ENCODE measurements at regions of chr5 and their contacts with region 1.

Region 1: GRCh38 chr5:22926574-22926973 is 73.4 kb upstream of the CDH12 start:
- DNase-seq: no peak
- H3K4me3 ChIP-seq: no peak overlapping the region
- H3K4me3 Mint-ChIP-seq: no peak overlapping the region
- H3K27ac Mint-ChIP-seq: no peak overlapping the region
- H3K4me1 ChIP-seq: no peaks in the 10 kb centered on the region
- H3K4me1 Mint-ChIP-seq: no peaks in the 10 kb centered on the region
- H3K27me3 ChIP-seq: no peaks in the 10 kb centered on the region
- H3K27me3 Mint-ChIP-seq: no peaks in the 10 kb centered on the region
- CTCF ChIP-seq: no peak

Region 2: GRCh38 chr5:22986281-22986680 is 59.7 kb after region 1 on chr5:
- CTCF ChIA-PET with region 1: no interaction called
- POLR2A ChIA-PET with region 1: no interaction called
- intact Hi-C with region 1: loop called (anchors 2 kb)
- DNase-seq: no peak
- H3K4me3 ChIP-seq: no peak overlapping the region
- H3K4me3 Mint-ChIP-seq: no peak overlapping the region
- H3K27ac Mint-ChIP-seq: no peak overlapping the region
- H3K4me1 ChIP-seq: no peaks in the 10 kb centered on the region
- H3K4me1 Mint-ChIP-seq: no peaks in the 10 kb centered on the region
- H3K27me3 ChIP-seq: no peaks in the 10 kb centered on the region
- H3K27me3 Mint-ChIP-seq: peaks cover 3% of the 10 kb centered on the region
- CTCF ChIP-seq: no peak

Measured in Caco-2 (cell line).